Calu3 (cell line): ENCODE measurements at regions of chr10 and their contacts with region 1.

Region 1: GRCh38 chr10:103667356-103667755 is 173.9 kb downstream of the NEURL1 start:
- DNase-seq: no peak
- H3K4me3 Mint-ChIP-seq: no peak overlapping the region
- H3K27ac Mint-ChIP-seq: no peak overlapping the region
- H3K4me1 Mint-ChIP-seq: peaks cover 10% of the 10 kb centered on the region
- H3K27me3 Mint-ChIP-seq: peaks cover 10% of the 10 kb centered on the region
- CTCF ChIP-seq: no peak

Region 2: GRCh38 chr10:103491493-103492381 is 175.6 kb before region 1 on chr10:
- CTCF ChIA-PET with region 1: no interaction called
- intact Hi-C with region 1: no loop called
- DNase-seq: no peak
- H3K4me3 Mint-ChIP-seq: no peak overlapping the region
- H3K27ac Mint-ChIP-seq: no peak overlapping the region
- H3K4me1 Mint-ChIP-seq: peaks cover 22% of the 10 kb centered on the region
- H3K27me3 Mint-ChIP-seq: peaks cover 47% of the 10 kb centered on the region
- CTCF ChIP-seq: no peak

Region 3: DNA sequence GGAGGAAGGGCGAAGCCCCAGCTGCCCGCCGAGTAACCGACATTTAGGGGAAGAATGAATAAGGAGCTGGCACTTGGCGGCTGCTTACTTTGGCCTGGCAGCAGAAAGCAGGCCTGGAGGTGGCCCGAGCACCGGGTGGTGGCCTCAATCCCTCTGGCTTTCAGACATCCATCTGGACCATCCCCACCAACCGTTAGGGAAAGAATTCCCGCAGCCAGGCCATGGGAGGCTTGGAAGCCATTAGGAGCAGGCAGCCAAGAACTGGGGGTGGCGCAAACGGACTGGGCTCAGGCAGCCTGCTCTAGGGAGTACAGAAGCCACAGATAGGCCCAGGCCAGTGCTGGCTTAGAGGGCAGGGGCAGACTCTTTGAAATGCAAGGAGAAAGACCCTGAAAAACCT is 41.2 kb before region 1 on chr10:
- CTCF ChIA-PET with region 1: no interaction called
- intact Hi-C with region 1: no loop called
- DNase-seq: no peak
- H3K4me3 Mint-ChIP-seq: no peak overlapping the region
- H3K27ac Mint-ChIP-seq: no peak overlapping the region
- H3K4me1 Mint-ChIP-seq: no peaks in the 10 kb centered on the region
- H3K27me3 Mint-ChIP-seq: no peaks in the 10 kb centered on the region
- CTCF ChIP-seq: no peak

Region 4: DNA sequence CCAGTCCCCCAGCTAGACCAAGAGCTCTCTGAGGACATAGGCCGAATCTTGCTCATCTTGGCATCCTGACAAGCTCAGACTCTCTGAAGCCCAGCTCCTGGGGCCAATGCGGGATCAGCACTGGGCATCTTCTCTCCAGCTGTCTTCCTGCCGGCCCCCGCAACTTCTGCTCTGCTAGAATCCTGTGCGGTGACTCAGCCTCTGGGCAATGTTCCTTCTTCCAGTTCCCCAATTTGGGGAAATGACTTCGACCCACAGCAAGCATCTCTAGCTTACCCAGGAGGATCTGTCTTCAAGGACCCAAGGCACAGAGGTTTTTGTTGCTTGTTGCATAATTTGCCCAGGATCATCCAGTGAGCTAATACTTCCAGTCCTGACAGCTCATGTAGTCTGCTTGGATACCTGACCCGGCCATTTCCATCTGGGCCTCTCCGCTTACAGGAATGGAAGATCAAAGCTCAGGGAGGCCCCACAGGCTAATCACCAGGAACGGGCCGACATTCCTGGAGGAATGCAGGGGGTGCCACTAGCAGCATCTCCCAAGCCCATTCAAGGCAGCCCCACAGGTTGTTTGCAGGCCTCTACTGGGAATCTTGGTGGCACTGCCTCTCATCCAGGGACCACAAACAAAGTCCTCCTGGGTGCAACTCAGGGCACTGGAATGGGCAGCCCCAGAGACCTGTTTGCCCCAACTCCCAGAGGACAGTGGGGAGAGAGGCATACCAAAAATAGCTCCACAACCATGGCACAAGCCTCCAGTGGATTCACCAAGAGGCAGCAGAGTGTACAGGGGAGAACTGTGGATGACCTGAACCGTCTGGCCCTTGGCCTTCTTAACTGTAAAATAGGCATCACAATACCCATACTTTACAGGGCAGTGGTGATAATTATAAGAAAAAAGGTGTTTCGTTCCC is 22.0 kb before region 1 on chr10:
- CTCF ChIA-PET with region 1: no interaction called
- intact Hi-C with region 1: no loop called
- DNase-seq: no peak
- H3K4me3 Mint-ChIP-seq: no peak overlapping the region
- H3K27ac Mint-ChIP-seq: no peak overlapping the region
- H3K4me1 Mint-ChIP-seq: no peaks in the 10 kb centered on the region
- H3K27me3 Mint-ChIP-seq: no peaks in the 10 kb centered on the region
- CTCF ChIP-seq: no peak

Region 5: GRCh38 chr10:103894441-103894885 is 227.1 kb after region 1 on chr10:
- CTCF ChIA-PET with region 1: interaction called, 10 read pairs
- intact Hi-C with region 1: no loop called
- DNase-seq: no peak
- H3K4me3 Mint-ChIP-seq: no peak overlapping the region
- H3K27ac Mint-ChIP-seq: no peak overlapping the region
- H3K4me1 Mint-ChIP-seq: peaks cover 41% of the 10 kb centered on the region
- H3K27me3 Mint-ChIP-seq: no peaks in the 10 kb centered on the region
- CTCF ChIP-seq: no peak